Activated naive CD4-positive, alpha-beta T cell treated with anti-CD3 and anti-CD28 coated beads for 36 hours (primary cell): ENCODE measurements at regions of chr17 and their contacts with region 1.

Region 1: GRCh38 chr17:38674749-38675615 is at the start of gene EPOP:
- DNase-seq: peak; percentile 91
- H3K4me3 Mint-ChIP-seq: peak within 1 kb of the TSS; percentile 63
- H3K27ac Mint-ChIP-seq: peak within 1 kb of the TSS; percentile 84
- H3K4me1 Mint-ChIP-seq: peaks cover 52% of the 10 kb centered on the region
- H3K27me3 Mint-ChIP-seq: peaks cover 13% of the 10 kb centered on the region
- total RNA-seq, gene EPOP: 17.6 to 19.2 TPM

Region 2: GRCh38 chr17:38687286-38687685 is 12.3 kb after region 1 on chr17:
- CTCF ChIA-PET with region 1: interaction called, 14 read pairs
- intact Hi-C with region 1: no loop called
- DNase-seq: no peak
- H3K4me3 Mint-ChIP-seq: no peak overlapping the region
- H3K27ac Mint-ChIP-seq: no peak overlapping the region
- H3K4me1 Mint-ChIP-seq: no peaks in the 10 kb centered on the region
- H3K27me3 Mint-ChIP-seq: no peaks in the 10 kb centered on the region

Region 3: DNA sequence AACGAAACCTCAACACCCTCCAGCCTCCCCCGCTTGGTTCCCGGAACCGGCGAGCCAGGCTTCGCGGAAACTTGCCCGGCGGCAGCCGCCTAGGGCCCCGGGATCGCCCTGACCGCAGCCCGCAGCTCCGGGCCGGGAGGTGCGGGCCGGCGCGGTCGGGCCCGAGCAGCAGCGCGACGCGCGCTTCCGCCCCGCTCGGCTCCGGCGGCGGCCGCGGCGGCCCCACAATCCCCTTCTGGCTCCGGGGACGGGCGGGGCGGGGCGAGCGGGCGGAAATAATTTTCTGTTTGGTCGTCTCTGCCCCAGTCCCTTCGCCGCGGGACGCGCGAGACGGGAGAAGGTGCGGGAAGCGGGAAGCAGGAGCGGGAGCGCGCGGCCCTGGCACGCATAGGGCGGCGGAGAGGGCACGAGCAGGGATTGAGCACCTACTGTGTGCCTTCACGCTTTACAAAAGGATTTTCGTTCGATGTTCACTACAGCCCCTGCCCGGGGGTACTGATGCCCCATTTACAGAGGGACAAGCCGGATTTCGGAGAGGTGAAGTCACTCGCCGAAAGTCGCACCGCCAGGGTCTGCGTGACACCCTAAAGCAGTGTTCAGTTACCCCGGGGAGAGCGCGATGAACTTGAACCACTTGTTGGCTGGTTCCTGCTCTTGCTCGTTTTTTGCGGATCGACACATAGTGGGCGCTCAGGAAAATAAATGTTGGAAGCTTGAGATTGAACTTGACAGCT is 27.4 kb after region 1 on chr17:
- CTCF ChIA-PET with region 1: interaction called, 32 read pairs
- intact Hi-C with region 1: loop called (anchors 1 kb)
- DNase-seq: peak; percentile 92
- H3K4me3 Mint-ChIP-seq: peak overlapping the region; percentile 100
- H3K27ac Mint-ChIP-seq: peak overlapping the region; percentile 100
- H3K4me1 Mint-ChIP-seq: peaks cover 45% of the 10 kb centered on the region
- H3K27me3 Mint-ChIP-seq: no peaks in the 10 kb centered on the region

Region 4: DNA sequence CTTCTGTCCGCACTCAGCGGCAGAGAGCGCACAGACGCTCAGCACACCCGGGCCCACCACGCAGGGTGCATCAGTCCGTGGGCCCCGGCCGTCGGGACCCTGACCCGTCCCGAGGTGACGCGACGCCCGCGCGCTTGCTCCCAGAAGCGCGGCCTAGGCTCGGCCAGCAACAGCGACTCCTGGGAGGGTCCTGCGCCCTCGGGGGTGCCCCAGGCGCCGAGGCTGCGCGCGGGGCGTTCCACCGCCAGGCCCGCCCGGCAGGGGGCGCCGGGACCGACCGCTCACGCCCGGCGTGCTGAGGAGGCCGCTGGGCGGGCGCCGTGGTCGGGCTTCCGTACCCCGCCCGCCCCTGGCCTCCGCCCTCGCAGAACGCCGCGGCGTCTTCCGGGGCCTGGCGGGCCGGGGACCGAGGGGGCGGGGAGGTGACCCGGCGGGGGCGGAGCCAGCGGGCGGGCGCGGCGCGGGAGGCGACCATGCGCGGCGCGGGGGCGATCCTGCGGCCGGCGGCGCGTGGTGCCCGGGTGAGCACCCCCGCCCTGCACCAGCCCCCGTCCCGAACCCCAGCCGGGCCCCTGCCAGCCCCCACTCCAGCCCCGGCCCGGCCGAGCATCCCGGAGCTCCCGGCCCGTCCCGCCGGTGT is 55.0 kb after region 1 on chr17 and contains the start of gene CISD3:
- CTCF ChIA-PET with region 1: interaction called, 60 read pairs
- intact Hi-C with region 1: loop called (anchors 1 kb)
- DNase-seq: peak; percentile 84
- H3K4me3 Mint-ChIP-seq: peak within 1 kb of the TSS; percentile 94
- H3K27ac Mint-ChIP-seq: peak within 1 kb of the TSS; percentile 98
- H3K4me1 Mint-ChIP-seq: peaks cover 83% of the 10 kb centered on the region
- H3K27me3 Mint-ChIP-seq: no peaks in the 10 kb centered on the region
- total RNA-seq, gene CISD3: 35.1 to 35.8 TPM

Region 5: GRCh38 chr17:38799378-38800236 is 124.6 kb after region 1 on chr17 and contains the start of gene PIP4K2B:
- CTCF ChIA-PET with region 1: no interaction called
- intact Hi-C with region 1: loop called (anchors 2 kb)
- DNase-seq: peak; percentile 91
- H3K4me3 Mint-ChIP-seq: peak within 1 kb of the TSS; percentile 95
- H3K27ac Mint-ChIP-seq: peak within 1 kb of the TSS; percentile 89
- H3K4me1 Mint-ChIP-seq: peaks cover 34% of the 10 kb centered on the region
- H3K27me3 Mint-ChIP-seq: no peaks in the 10 kb centered on the region
- total RNA-seq, gene PIP4K2B: 30.1 to 33.4 TPM